Right ventricle myocardium inferior (tissue), 1 donor: ENCODE measurements at regions of chr17 and their contacts with region 1.

Region 1: DNA sequence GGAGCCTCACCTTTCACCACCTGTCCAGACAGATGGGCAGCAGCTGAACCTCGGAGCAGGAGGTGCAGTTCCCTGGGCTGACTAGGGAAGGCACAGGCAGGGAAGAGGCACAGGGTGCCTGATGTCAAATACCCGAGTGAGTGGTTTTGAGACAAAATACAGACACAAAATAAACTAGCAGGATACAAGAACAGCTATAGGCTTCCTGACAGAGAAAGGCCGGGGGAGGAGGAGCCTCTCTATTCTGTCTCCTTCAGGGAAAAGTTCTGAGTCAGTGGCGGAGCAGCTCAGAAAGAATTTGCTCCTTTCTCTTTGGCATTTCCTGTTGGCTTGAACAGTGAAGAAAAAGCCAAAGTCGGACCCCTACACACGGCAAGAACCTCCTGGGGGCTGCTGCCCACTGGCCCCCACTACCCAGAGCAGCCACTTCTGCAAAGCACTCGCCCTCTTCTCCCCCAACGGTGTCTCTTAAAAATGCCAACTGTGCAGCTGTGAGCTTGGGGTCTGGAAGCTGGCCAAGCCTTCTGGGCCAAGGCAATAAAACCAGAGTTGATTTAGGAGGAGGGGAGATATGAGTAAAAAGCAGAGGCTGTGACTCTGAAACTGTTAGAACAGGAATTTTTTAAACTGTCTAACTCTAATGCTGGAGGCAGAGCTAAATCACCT is 14.4 kb upstream of the FAAP100 start:
- DNase-seq: peak; percentile 80
- ATAC-seq: peak; percentile 52

Region 2: GRCh38 chr17:81527591-81528383 is 38.8 kb before region 1 on chr17 and contains the start of gene FSCN2:
- intact Hi-C with region 1: no loop called
- DNase-seq: peak; percentile 47
- ATAC-seq: no peak
- total RNA-seq, gene FSCN2: 0.19 TPM

Region 3: GRCh38 chr17:81601525-81602120 is 35.0 kb after region 1 on chr17:
- intact Hi-C with region 1: loop called (anchors 5 kb)
- DNase-seq: no peak
- ATAC-seq: peak; percentile 75

Region 4: DNA sequence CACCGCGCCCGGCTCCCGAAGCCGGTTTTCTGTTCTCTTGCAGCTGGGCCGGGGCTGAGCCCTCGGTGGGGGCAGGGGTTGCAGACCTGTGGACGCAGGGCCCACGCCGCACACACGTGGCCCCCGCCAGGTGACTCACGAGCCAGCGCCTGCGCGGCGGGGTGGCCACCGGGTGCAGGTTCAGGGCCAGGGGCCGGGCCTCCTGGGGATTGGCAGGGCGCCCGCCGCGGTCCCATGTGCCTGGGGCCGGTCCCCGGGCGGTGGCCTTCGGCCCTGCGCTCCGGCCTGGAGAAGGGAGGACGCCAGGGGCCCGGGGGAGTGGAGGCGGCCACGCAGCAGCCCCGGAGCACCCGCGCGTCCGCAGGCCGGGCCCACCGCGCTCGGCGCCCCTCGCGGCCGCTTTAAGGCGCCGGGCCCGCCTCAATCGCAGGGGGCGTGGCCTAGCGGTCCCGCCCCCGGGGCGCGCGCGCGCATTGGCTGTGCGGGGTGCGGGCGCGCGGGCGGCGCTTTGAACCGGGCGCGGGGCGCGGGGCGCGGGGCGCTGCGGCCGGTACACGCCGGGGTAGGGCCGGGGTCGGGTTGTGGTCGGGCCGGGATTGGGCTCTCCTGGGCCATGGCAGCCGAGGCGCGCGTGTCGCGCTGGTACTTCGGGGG is 145.3 kb after region 1 on chr17 and contains the start of gene SLC25A10:
- intact Hi-C with region 1: no loop called
- DNase-seq: peak; percentile 87
- ATAC-seq: peak; percentile 80
- total RNA-seq, gene SLC25A10: 7.4 TPM